Vagina (tissue), 2 donors: ENCODE measurements at regions of chrX and their contacts with region 1.

Region 1: DNA sequence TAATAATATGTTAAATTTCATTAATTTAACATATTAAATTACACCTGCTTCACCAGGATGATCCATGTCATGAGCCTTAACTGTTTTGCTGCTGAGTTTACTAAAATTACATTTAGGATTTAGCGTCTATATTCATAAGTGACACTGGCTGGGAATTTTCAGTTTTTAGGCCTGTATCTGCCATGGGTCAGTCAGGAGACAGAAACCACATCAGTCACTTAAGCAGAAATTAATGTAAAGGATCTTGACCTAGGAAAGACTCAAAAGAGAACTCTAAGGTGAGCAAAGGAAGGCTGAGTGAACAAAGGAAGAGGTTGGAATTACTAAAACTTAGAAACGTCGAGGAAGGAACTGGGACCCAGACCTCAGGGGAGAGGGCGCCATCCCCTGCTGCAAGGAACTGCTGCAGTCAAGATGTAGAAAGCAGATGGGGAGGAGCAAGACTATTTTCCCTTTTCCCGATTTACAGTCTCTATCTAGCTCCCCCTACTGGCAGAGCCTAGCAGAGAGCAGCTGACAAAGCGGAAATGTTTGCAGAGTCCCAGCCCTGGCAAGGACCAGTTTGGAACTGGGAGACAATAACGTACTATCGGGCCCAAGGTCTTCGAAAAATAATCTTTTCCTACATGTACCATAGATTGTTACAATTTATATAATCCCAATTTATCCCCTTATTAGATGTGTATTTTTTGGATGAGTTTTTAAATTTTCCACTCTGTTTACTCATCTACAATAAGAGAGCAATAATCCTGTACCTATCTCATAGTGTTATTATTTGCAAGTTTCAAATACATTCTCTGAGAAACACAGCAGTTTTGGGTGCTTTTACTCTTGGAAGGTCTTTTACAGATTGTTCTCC is 22.6 kb upstream of the RBBP7 start:
- DNase-seq: no peak
- H3K4me3 ChIP-seq: no peak overlapping the region
- H3K27ac ChIP-seq: no peak overlapping the region
- H3K4me1 ChIP-seq: no peaks in the 10 kb centered on the region
- H3K27me3 ChIP-seq: no peaks in the 10 kb centered on the region
- CTCF ChIP-seq: peak; percentile 40 to 79 (median 58)
- POLR2A ChIP-seq: no peak

Region 2: GRCh38 chrX:16826207-16826606 is 66.5 kb before region 1 on chrX:
- intact Hi-C with region 1: loop called (anchors 10 kb)
- DNase-seq: no peak
- H3K4me3 ChIP-seq: no peak overlapping the region
- H3K27ac ChIP-seq: no peak overlapping the region
- H3K4me1 ChIP-seq: no peaks in the 10 kb centered on the region
- H3K27me3 ChIP-seq: no peaks in the 10 kb centered on the region
- CTCF ChIP-seq: peak; percentile 18 to 62 (median 39)
- POLR2A ChIP-seq: no peak